ENCODE measurements at regions of chr1 and their contacts with region 1.

Region 1: DNA sequence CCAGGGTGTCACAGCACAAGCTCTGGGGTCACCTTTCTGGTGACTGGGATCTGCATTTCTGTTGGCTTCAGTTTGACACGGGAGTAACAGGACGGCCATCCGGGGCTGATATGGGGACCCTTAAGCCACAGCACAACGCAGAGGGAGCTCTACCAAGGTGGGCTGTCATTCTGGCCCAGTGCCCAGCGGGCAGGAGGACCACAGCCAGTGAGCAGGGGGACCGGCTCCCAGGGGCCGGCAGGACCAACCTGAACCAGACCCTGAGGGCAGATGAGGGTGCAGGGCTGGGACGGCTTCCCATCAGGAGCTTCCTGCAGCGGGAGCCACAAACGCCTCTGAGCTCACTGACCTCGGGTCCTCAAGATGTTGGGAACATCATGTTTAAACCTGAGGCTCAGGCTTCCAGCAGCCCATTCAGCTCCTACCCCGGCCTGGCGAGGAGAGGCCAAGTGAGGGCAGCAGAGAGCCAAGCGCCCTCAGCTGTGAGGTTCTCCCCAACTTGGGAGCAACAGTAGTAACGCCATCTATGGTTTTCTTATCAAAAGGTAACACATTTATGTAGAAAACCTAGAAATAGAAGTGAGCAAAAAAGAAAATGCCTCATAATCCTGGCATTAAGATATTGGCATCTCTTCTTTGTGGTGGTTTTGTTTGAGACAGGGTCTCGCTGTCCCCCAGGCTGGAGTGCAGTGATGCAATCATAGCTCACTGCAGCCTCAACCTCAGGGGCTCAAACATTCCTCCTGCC is 26.8 kb downstream of the TMEM201 start:
- DNase-seq: peak; percentile 71
- ATAC-seq: peak; percentile 93
- H3K4me3 Mint-ChIP-seq: no peak overlapping the region
- H3K27ac Mint-ChIP-seq: no peak overlapping the region
- H3K4me1 Mint-ChIP-seq: no peaks in the 10 kb centered on the region
- H3K27me3 Mint-ChIP-seq: peaks cover 6% of the 10 kb centered on the region
- CTCF ChIP-seq: peak; percentile 70

Region 2: DNA sequence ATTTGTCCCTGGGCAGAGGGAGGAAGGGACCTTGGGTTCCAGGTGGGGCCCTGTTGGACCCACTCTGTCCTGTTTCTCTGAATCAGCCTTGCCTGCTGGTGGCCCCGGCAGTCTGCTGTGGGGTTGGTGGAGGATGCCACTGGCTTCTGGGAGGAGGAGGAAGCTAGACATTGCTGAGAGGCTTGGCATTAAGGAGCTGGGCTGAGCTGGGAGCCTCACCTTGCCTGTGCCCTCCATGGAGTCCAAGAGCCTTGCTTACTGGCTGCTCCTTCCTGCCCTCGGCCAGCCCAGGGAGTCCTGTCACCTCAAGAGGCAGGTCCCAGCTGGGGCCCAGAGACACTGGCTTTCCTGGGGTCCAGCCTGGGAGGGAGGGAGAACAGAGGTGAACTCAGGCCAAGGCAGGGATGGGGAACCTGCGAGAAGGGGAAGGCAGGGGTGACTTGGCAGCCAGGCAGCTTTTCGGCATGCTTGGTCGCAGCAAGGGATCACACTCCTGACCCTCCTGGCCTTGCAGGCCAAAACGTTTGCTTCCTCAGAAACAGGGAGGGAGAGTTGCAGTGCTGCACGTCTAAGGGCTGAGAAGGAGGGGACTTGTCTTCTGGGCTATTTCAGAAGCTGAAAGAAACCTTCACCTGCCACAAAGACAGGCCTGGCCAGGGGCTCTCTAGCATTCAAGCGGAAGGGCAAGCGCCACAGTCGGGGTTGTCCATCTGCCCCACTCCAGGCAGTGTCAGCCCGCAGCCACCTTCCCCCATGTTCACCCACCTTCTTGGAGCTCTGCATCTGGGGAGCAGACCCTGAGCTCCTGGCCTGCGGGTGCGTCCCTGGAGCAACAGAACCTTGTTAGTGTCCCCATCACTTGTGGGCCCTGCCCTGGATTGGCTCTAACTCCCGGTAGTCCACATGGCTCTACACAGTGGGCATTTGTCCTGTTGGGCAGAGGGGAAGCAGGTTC is 17.9 kb before region 1 on chr1:
- CTCF ChIA-PET with region 1: interaction called, 10 read pairs
- POLR2A ChIA-PET with region 1: interaction called, 6 read pairs
- intact Hi-C with region 1: no loop called
- DNase-seq: no peak
- ATAC-seq: no peak
- H3K4me3 Mint-ChIP-seq: no peak overlapping the region
- H3K27ac Mint-ChIP-seq: no peak overlapping the region
- H3K4me1 Mint-ChIP-seq: peaks cover 12% of the 10 kb centered on the region
- H3K27me3 Mint-ChIP-seq: no peaks in the 10 kb centered on the region
- CTCF ChIP-seq: no peak

Region 3: DNA sequence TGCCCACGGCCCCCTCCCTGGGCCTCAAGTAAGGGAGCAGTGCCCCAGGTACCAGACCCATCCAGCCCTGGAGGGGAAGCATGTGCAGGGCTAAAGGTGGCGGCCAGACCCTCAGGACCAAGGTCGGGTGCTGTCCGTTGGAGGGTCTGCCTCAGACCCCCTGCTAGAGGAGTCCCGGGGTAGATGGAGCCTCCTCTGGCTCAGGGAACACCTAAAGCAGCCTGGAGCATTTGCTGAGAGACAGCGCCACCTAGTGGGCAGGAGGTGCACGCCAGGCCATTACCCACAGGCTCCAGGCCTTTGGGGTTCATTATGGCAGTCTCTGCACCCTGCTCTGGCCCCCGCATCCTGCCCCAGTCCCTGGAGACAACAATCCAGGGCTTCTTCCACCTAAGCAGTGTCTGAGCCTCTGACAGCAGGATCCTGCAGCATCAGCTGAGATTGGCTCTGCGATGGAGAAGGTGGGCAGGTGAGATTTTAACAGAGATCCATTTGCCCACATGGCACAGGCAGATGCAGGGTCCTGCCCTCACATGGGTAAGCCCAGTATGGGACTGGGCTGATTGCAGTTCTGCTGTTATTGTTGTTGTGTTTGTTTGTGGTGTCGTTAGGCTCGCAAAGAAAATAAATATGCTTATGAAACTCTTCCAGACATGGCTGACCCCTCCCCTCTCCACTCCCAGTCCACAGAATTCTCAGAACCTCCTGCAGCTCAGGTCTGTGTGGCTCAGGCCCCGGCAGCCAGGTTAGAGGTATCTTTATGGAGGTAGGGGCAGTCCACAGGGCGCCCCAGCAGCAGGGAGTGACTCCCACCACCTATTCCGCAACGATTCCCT is 252.1 kb after region 1 on chr1:
- CTCF ChIA-PET with region 1: interaction called, 20 read pairs
- POLR2A ChIA-PET with region 1: no interaction called
- intact Hi-C with region 1: no loop called
- DNase-seq: peak; percentile 94
- ATAC-seq: peak; percentile 99
- H3K4me3 Mint-ChIP-seq: no peak overlapping the region
- H3K27ac Mint-ChIP-seq: no peak overlapping the region
- H3K4me1 Mint-ChIP-seq: no peaks in the 10 kb centered on the region
- H3K27me3 Mint-ChIP-seq: no peaks in the 10 kb centered on the region
- CTCF ChIP-seq: peak; percentile 94

Measured in activated CD8-positive, alpha-beta T cell treated with anti-CD3 and anti-CD28 coated beads for 36 hours (primary cell).